Transverse colon (tissue), 4 donors: ENCODE measurements at regions of chr15 and their contacts with region 1.

Region 1: GRCh38 chr15:88018856-88019641 is 237.5 kb downstream of the NTRK3 start:
- DNase-seq: no peak
- H3K4me3 ChIP-seq: no peak overlapping the region
- H3K27ac ChIP-seq: no peak overlapping the region
- H3K4me1 ChIP-seq: no peaks in the 10 kb centered on the region
- H3K27me3 ChIP-seq: no peaks in the 10 kb centered on the region
- CTCF ChIP-seq: no peak
- EP300 ChIP-seq: no peak
- POLR2A ChIP-seq: no peak

Region 2: DNA sequence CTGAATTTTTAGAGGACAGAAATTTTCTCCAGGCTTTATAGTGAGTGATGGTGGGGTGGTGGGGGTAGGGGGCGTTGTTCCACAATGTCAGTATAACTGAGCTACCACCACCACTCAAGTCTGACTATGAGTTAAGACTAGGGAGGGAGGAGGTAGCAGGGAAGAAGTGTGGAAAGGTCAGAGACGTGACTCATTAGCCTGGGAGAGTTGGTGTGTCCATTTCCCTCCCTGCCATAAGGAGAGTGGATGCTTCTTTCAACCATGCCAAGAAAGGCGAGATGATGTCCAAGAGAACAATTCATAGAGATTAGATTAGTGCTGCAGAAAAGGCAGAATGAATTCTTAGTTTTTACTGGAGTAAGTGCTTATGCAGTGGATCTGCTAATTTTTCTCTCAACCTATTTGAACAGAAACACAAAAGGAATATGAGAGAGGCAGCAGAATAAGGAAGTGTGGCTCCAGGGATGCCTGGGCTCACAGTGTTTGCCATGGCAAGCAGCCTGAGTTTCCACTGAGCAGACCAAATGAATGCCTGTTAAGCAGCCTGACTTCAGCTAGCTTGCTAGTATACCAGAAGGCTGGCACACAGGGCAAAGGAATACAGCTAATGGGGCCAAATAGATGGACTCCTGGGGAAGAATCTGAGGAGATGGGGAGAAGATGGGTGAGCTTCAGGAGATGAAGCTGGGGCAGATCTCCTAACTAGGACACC is 471.4 kb before region 1 on chr15:
- in situ Hi-C with region 1: no loop called
- intact Hi-C with region 1: loop called (anchors 5 kb)
- DNase-seq: no peak
- H3K4me3 ChIP-seq: no peak overlapping the region
- H3K27ac ChIP-seq: no peak overlapping the region
- H3K4me1 ChIP-seq: no peaks in the 10 kb centered on the region
- H3K27me3 ChIP-seq: no peaks in the 10 kb centered on the region
- CTCF ChIP-seq: no peak
- EP300 ChIP-seq: no peak
- POLR2A ChIP-seq: no peak

Region 3: DNA sequence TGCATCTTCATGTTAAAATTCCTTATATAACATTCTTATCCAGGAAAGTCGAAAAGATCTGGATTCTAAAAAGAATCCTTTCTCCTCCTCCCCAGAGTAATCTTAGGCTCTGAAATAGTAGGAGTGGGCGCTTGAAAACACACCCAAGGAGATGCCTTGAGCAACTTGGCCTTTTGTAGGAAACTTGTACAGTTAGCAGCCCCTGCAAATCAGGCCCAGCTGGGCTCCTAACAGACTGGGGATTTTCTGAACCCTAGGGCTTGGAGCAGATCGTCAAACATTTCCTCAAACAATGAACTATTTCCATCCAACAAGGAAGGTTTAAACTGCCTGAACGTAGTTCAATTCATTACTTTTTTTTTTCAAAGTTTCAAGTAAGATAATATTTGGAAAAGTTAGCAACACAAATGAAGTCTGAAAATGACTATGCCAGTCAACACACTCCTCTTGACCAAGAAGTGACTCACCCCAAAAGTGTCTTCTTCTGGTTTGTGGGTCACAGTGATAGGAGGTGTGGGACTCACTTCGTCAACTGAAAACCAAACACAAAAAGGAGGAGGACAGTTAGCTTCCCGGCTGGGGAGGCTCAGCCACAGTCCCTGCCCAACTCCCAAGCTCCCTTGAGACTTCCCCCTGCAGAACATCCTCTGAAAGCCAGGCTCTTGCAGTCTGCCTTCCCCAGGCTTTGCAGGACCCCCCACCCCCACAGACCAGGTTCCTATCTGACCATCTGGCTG is 107.8 kb after region 1 on chr15:
- in situ Hi-C with region 1: loop called in 1 of 4 experiments (anchors 25 kb)
- intact Hi-C with region 1: no loop called
- DNase-seq: no peak
- H3K4me3 ChIP-seq: no peak overlapping the region
- H3K27ac ChIP-seq: no peak overlapping the region
- H3K4me1 ChIP-seq: no peaks in the 10 kb centered on the region
- H3K27me3 ChIP-seq: no peaks in the 10 kb centered on the region
- CTCF ChIP-seq: no peak
- EP300 ChIP-seq: no peak
- POLR2A ChIP-seq: no peak